Endothelial cell of umbilical vein (primary cell): ENCODE measurements at regions of chr4 and their contacts with region 1.

Region 1: GRCh38 chr4:136650541-136651277 is 881.6 kb downstream of the PCDH18 start:
- DNase-seq: peak; percentile 63
- H3K4me3 ChIP-seq: no peak overlapping the region
- H3K27ac ChIP-seq: peak overlapping the region; percentile 54
- H3K4me1 ChIP-seq: peaks cover 16% of the 10 kb centered on the region
- H3K27me3 ChIP-seq: no peaks in the 10 kb centered on the region
- CTCF ChIP-seq: no peak
- POLR2A ChIP-seq: no peak

Region 2: DNA sequence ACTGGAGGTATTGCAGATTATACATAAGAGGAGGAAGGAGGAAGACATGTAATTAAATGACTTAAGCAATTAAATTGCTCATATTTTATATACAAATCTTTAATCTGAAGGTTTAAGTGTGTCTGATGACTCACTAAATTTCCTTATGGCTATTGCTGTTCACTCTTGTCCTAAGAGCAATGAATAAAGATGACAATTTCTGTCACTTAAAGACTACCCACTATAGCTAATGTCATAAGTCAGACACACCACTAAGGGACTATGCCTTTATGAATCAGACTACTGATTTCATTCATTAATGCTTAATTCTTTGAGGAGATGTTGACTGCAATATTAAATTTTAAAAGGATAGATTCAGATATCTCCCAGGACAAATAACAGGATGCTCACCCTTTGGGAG is 633.2 kb before region 1 on chr4:
- CTCF ChIA-PET with region 1: no interaction called
- POLR2A ChIA-PET with region 1: no interaction called
- dilution Hi-C with region 1: no loop called
- intact Hi-C with region 1: no loop called
- DNase-seq: no peak
- H3K4me3 ChIP-seq: no peak overlapping the region
- H3K27ac ChIP-seq: no peak overlapping the region
- H3K4me1 ChIP-seq: no peaks in the 10 kb centered on the region
- H3K27me3 ChIP-seq: no peaks in the 10 kb centered on the region
- CTCF ChIP-seq: no peak
- POLR2A ChIP-seq: no peak

Region 3: GRCh38 chr4:136485006-136485405 is 165.7 kb before region 1 on chr4:
- CTCF ChIA-PET with region 1: no interaction called
- POLR2A ChIA-PET with region 1: no interaction called
- dilution Hi-C with region 1: no loop called
- intact Hi-C with region 1: loop called (anchors 5 kb)
- DNase-seq: peak; percentile 53
- H3K4me3 ChIP-seq: no peak overlapping the region
- H3K27ac ChIP-seq: no peak overlapping the region
- H3K4me1 ChIP-seq: peaks cover 4% of the 10 kb centered on the region
- H3K27me3 ChIP-seq: no peaks in the 10 kb centered on the region
- CTCF ChIP-seq: no peak
- POLR2A ChIP-seq: no peak

Region 4: GRCh38 chr4:136637071-136637777 is 13.5 kb before region 1 on chr4:
- CTCF ChIA-PET with region 1: no interaction called
- POLR2A ChIA-PET with region 1: no interaction called
- dilution Hi-C with region 1: no loop called
- intact Hi-C with region 1: no loop called
- DNase-seq: peak; percentile 16
- H3K4me3 ChIP-seq: no peak overlapping the region
- H3K27ac ChIP-seq: no peak overlapping the region
- H3K4me1 ChIP-seq: no peaks in the 10 kb centered on the region
- H3K27me3 ChIP-seq: no peaks in the 10 kb centered on the region
- CTCF ChIP-seq: peak; percentile 31 to 46
- POLR2A ChIP-seq: no peak

Region 5: DNA sequence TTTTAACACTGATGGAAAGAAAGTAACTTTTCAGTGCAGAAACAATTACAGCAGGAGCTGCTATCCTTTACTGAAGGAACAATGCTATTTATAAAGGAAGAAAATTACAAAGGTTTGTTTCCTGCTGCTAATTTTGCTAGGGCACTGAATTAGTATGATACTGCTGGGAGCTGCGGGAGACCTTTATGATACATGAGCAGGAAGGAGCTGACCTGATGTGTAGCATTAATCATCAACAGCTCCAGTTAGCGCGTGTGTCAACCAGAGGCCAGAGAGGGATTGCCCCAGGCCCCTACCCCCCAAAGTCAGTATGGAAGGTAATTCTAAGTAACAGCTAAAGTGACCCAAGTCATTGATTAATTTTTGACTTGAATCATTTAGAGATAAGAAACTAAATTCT is 152.7 kb after region 1 on chr4:
- CTCF ChIA-PET with region 1: no interaction called
- POLR2A ChIA-PET with region 1: no interaction called
- dilution Hi-C with region 1: no loop called
- intact Hi-C with region 1: no loop called
- DNase-seq: peak; percentile 14
- H3K4me3 ChIP-seq: no peak overlapping the region
- H3K27ac ChIP-seq: no peak overlapping the region
- H3K4me1 ChIP-seq: no peaks in the 10 kb centered on the region
- H3K27me3 ChIP-seq: no peaks in the 10 kb centered on the region
- CTCF ChIP-seq: no peak
- POLR2A ChIP-seq: no peak

Region 6: DNA sequence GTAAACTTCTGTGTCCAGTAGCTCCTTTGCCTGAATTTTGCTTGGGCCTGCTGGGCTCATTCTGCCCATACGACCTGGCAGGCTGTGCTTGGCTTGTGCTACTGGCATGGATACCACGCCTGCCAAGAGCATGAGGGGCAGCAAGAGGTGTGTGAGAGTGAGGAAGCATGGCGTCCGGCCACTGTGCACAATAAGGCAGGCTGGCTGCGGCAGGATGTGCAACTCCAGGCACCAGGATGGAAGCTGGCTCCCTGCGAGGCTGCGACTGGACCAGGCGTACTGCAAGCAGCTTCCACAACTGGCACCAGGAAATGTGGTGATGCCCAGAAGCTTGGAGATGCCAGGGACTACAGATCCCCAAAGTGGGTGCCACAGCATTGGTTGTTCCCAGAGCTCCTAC is 172.3 kb after region 1 on chr4:
- CTCF ChIA-PET with region 1: no interaction called
- POLR2A ChIA-PET with region 1: no interaction called
- dilution Hi-C with region 1: no loop called
- intact Hi-C with region 1: no loop called
- DNase-seq: no peak
- H3K4me3 ChIP-seq: no peak overlapping the region
- H3K27ac ChIP-seq: no peak overlapping the region
- H3K4me1 ChIP-seq: peaks cover 6% of the 10 kb centered on the region
- H3K27me3 ChIP-seq: no peaks in the 10 kb centered on the region
- CTCF ChIP-seq: no peak
- POLR2A ChIP-seq: no peak